ENCODE measurements at regions of chr1 and their contacts with region 1.

Region 1: DNA sequence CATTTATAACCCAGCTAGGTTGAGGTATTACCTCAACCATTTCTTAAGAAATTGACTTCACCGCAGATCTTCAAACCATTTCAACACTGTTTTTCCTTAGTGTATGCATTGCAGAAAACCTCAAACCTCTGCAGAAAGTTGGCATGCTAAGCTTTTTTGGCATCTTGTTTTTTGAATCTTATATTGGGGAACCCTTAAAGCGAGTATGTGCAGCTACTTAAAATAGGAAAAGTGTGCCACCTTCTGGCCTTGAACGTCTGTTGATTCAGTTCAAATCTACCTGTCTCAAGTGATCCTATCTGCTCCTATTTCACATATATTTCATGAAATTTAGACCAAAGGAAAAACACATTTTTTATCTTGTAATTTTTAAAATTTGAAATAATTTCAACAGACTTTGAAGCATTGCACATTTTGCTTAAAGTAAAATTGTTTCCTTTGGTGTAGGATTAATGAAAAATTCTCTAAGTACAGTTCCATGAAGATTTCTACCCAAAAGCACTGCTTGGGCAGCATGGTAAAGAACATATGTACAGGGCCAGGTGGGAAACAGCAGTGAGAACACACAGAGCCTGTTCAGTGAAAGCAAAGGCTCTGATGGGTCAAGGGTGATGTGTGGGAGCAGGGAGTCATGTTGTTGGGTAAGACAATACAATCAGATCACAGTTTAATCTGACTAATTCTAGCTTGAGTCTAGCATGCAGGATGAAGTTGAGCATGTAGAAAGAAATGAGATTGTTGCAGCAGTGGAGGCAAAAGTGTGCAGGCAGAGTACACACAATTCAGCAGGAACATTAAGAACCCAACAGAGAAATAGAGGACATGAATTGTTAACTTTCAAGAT is 17.2 kb downstream of the HENMT1 start:
- DNase-seq: peak; percentile 69
- H3K4me3 ChIP-seq: no peak overlapping the region
- H3K27ac ChIP-seq: no peak overlapping the region
- H3K4me1 ChIP-seq: no peaks in the 10 kb centered on the region
- CTCF ChIP-seq: peak; percentile 90

Region 2: GRCh38 chr1:108199781-108200570 is 443.7 kb before region 1 on chr1 and contains the start of gene SLC25A24:
- CTCF ChIA-PET with region 1: no interaction called
- POLR2A ChIA-PET with region 1: no interaction called
- intact Hi-C with region 1: loop called (anchors 10 kb)
- DNase-seq: no peak
- H3K4me3 ChIP-seq: peak within 1 kb of the TSS; percentile 50
- H3K27ac ChIP-seq: no peak within 1 kb of the TSS
- H3K4me1 ChIP-seq: no peaks in the 10 kb centered on the region
- CTCF ChIP-seq: no peak
- total RNA-seq, gene SLC25A24: not detected in 2 replicates

Region 3: GRCh38 chr1:108512239-108512981 is 131.3 kb before region 1 on chr1:
- CTCF ChIA-PET with region 1: interaction called, 4 read pairs
- POLR2A ChIA-PET with region 1: no interaction called
- intact Hi-C with region 1: loop called (anchors 1 kb)
- DNase-seq: peak; percentile 59
- H3K4me3 ChIP-seq: no peak overlapping the region
- H3K27ac ChIP-seq: no peak overlapping the region
- H3K4me1 ChIP-seq: no peaks in the 10 kb centered on the region
- CTCF ChIP-seq: peak; percentile 98

Region 4: DNA sequence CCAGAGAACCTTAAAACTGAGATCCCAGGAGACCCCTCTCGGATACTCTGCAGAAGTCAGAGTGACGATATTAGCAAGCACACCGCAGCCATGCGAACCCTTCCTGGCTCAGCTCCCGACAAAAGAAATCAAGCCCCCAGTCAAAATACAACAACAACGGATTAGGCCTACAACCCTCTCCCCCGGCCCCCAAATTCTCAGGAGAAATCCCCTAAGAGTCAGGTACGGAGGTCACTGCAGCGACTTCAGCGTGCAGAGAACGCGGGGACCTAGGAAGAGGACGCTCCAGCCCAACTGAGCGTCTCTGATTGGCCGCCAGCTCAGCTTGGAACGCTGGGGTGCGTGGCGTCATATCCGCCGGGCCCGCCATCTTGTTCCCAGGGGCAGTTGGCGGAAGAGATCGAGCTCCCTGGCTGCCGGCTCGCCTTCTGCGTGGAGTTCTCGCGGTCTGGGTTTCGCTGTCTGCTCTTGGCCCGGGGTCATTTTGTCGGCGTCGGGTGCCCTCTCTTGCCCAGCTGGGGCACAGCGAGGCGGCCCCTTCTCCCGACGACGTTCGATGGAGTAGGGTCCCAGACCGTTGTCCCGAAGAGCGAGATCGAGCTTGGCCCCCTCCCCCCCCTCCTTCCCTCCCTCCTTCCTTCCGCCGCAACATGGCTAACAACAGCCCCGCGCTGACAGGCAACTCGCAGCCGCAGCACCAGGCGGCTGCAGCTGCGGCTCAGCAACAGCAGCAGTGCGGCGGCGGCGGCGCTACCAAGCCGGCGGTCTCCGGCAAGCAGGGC is 48.4 kb after region 1 on chr1 and contains the start of gene PRPF38B:
- CTCF ChIA-PET with region 1: no interaction called
- POLR2A ChIA-PET with region 1: no interaction called
- intact Hi-C with region 1: no loop called
- DNase-seq: peak; percentile 94
- H3K4me3 ChIP-seq: peak within 1 kb of the TSS; percentile 97
- H3K27ac ChIP-seq: peak within 1 kb of the TSS; percentile 83
- H3K4me1 ChIP-seq: peaks cover 28% of the 10 kb centered on the region
- CTCF ChIP-seq: no peak
- total RNA-seq, gene PRPF38B: 37.7 and 47.4 TPM in 2 replicates